ENCODE measurements at regions of chr18 and their contacts with region 1.

Region 1: DNA sequence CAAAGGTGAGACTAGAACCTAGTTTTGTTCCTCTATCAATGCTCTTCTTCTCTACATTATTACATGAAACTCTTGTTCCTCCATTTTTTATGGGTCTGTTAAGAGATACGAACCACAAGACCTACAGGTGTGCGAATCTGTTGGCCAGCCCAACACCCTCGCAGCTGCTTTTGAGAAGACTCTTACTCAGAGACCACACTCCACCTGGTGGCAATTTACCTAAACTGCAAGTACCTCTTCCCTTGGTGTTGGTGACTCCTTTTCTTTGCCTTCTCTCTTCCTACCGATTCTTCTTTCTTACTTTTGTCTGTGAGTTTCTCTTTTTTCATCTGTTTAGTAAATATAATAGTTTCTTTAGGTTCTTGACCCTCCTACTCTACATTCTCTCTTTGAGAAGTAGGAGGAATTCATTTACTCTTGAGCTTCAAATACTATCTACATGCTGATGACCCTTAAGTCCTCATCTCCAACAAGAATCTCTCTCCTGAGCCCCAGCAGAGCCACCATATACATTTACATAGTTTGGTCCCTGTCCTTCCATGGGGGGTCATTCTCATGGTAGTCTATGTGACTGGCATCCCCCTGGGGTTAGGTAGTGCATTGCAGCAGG is 81.8 kb upstream of the GAREM1 start:
- DNase-seq: peak; percentile 56 to 65 (median 63)
- ATAC-seq: peak; percentile 85
- H3K4me3 ChIP-seq: no peak overlapping the region
- H3K27ac ChIP-seq: no peak overlapping the region
- H3K4me1 ChIP-seq: no peaks in the 10 kb centered on the region
- H3K27me3 ChIP-seq: no peaks in the 10 kb centered on the region
- CTCF ChIP-seq: peak; percentile 52 to 72 (median 63)
- EP300 ChIP-seq: no peak
- POLR2A ChIP-seq: no peak
- RAD21 ChIP-seq: peak; percentile 53 to 75

Region 2: GRCh38 chr18:32158108-32158624 is 394.4 kb before region 1 on chr18:
- CTCF ChIA-PET with region 1: interaction called, 9 read pairs
- POLR2A ChIA-PET with region 1: no interaction called
- in situ Hi-C with region 1: no loop called
- intact Hi-C with region 1: loop called (anchors 1 kb)
- DNase-seq: peak; percentile 67 to 89 (median 71)
- ATAC-seq: peak; percentile 97
- H3K4me3 ChIP-seq: no peak overlapping the region
- H3K27ac ChIP-seq: no peak overlapping the region
- H3K4me1 ChIP-seq: no peaks in the 10 kb centered on the region
- H3K27me3 ChIP-seq: peaks cover 0 to 4% of the 10 kb centered on the region in 2 experiments; a peak in 1 of 5 replicates
- CTCF ChIP-seq: peak; percentile 82 to 91 (median 89)
- EP300 ChIP-seq: no peak
- POLR2A ChIP-seq: no peak
- RAD21 ChIP-seq: peak; percentile 77 to 94

Region 3: DNA sequence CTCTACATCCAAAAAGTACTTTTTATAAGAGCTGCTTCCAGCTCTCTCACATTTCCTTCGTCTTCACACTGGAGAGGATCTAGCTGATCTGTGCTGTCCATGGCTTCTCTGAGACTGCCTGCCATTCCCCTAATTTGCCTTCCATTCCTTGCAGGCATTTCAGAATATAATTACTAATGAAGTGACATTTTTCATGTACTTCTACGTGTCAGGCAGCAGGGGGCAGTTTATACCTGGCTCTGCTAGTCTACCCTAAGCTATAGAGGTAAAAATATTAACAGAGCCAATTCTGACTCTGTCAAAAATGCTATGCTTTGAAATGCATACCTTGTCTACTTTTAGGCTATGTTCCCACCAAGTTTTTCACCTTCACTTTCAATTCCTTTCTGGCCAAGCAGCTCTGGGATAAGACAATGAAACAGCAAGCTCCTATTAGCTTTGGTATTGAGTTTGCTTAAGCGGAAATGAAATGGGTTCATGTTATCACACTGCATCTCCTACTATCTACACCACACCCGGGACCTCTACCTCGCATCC is 280.8 kb before region 1 on chr18:
- CTCF ChIA-PET with region 1: interaction called, 6 read pairs
- POLR2A ChIA-PET with region 1: no interaction called
- in situ Hi-C with region 1: no loop called
- intact Hi-C with region 1: loop called (anchors 1 kb)
- DNase-seq: peak; percentile 34 to 56 (median 47)
- ATAC-seq: peak; percentile 87
- H3K4me3 ChIP-seq: no peak overlapping the region
- H3K27ac ChIP-seq: no peak overlapping the region
- H3K4me1 ChIP-seq: no peaks in the 10 kb centered on the region
- H3K27me3 ChIP-seq: 0 out of 5 replicates have a peak, but pooled peaks cover 0 to 2% of the 10 kb centered on the region in 2 experiments
- CTCF ChIP-seq: peak; percentile 41 to 75 (median 58); a peak in 3 of 6 replicates
- EP300 ChIP-seq: no peak
- POLR2A ChIP-seq: no peak
- RAD21 ChIP-seq: peak; percentile 68 to 79

Region 4: GRCh38 chr18:32289483-32290075 is 262.9 kb before region 1 on chr18:
- CTCF ChIA-PET with region 1: no interaction called
- POLR2A ChIA-PET with region 1: no interaction called
- in situ Hi-C with region 1: no loop called
- intact Hi-C with region 1: loop called (anchors 5 kb)
- DNase-seq: peak in 2 of 4 experiments; percentile 44 to 53
- ATAC-seq: peak; percentile 84
- H3K4me3 ChIP-seq: no peak overlapping the region
- H3K27ac ChIP-seq: no peak overlapping the region
- H3K4me1 ChIP-seq: no peaks in the 10 kb centered on the region
- H3K27me3 ChIP-seq: no peaks in the 10 kb centered on the region; a peak in 1 of 5 replicates
- CTCF ChIP-seq: peak; percentile 48 to 55 (median 52)
- EP300 ChIP-seq: no peak
- POLR2A ChIP-seq: no peak
- RAD21 ChIP-seq: peak; percentile 21 to 34; a peak in 2 of 4 replicates

Region 5: GRCh38 chr18:32494111-32494510 is 58.4 kb before region 1 on chr18:
- CTCF ChIA-PET with region 1: no interaction called
- POLR2A ChIA-PET with region 1: no interaction called
- in situ Hi-C with region 1: no loop called
- intact Hi-C with region 1: no loop called
- DNase-seq: no peak
- ATAC-seq: no peak
- H3K4me3 ChIP-seq: no peak overlapping the region
- H3K27ac ChIP-seq: no peak overlapping the region
- H3K4me1 ChIP-seq: no peaks in the 10 kb centered on the region
- H3K27me3 ChIP-seq: no peaks in the 10 kb centered on the region
- CTCF ChIP-seq: no peak
- EP300 ChIP-seq: no peak
- POLR2A ChIP-seq: no peak
- RAD21 ChIP-seq: no peak